A673 (cell line): ENCODE measurements at regions of chr1 and their contacts with region 1.

Region 1: GRCh38 chr1:15762546-15762945 is 4.0 kb downstream of the FBLIM1 start:
- DNase-seq: no peak
- H3K4me3 ChIP-seq: no peak overlapping the region
- H3K27ac ChIP-seq: no peak overlapping the region
- H3K4me1 ChIP-seq: peaks cover 24% of the 10 kb centered on the region
- H3K27me3 ChIP-seq: no peaks in the 10 kb centered on the region
- CTCF ChIP-seq: no peak

Region 2: GRCh38 chr1:15501208-15502032 is 261.1 kb before region 1 on chr1:
- CTCF ChIA-PET with region 1: no interaction called
- POLR2A ChIA-PET with region 1: no interaction called
- intact Hi-C with region 1: no loop called
- DNase-seq: peak; percentile 73
- H3K4me3 ChIP-seq: no peak overlapping the region
- H3K27ac ChIP-seq: no peak overlapping the region
- H3K4me1 ChIP-seq: no peaks in the 10 kb centered on the region
- H3K27me3 ChIP-seq: no peaks in the 10 kb centered on the region
- CTCF ChIP-seq: peak; percentile 89

Region 3: GRCh38 chr1:15610167-15610566 is 152.4 kb before region 1 on chr1:
- CTCF ChIA-PET with region 1: no interaction called
- POLR2A ChIA-PET with region 1: interaction called, 15 read pairs
- intact Hi-C with region 1: no loop called
- DNase-seq: no peak
- H3K4me3 ChIP-seq: no peak overlapping the region
- H3K27ac ChIP-seq: no peak overlapping the region
- H3K4me1 ChIP-seq: no peaks in the 10 kb centered on the region
- H3K27me3 ChIP-seq: no peaks in the 10 kb centered on the region
- CTCF ChIP-seq: no peak